ENCODE measurements at regions of chr2 and their contacts with region 1.

Region 1: GRCh38 chr2:113198790-113199612 is 25.2 kb downstream of the PSD4 start:
- DNase-seq: no peak
- H3K4me3 ChIP-seq: peak overlapping the region; percentile 71
- H3K27ac ChIP-seq: no peak overlapping the region
- H3K27me3 ChIP-seq: peaks cover 18% of the 10 kb centered on the region
- CTCF ChIP-seq: peak; percentile 78

Region 2: GRCh38 chr2:112782234-112782799 is 416.7 kb before region 1 on chr2:
- CTCF ChIA-PET with region 1: no interaction called
- POLR2A ChIA-PET with region 1: no interaction called
- DNase-seq: no peak
- H3K4me3 ChIP-seq: no peak overlapping the region
- H3K27ac ChIP-seq: no peak overlapping the region
- H3K27me3 ChIP-seq: no peaks in the 10 kb centered on the region
- CTCF ChIP-seq: no peak

Region 3: DNA sequence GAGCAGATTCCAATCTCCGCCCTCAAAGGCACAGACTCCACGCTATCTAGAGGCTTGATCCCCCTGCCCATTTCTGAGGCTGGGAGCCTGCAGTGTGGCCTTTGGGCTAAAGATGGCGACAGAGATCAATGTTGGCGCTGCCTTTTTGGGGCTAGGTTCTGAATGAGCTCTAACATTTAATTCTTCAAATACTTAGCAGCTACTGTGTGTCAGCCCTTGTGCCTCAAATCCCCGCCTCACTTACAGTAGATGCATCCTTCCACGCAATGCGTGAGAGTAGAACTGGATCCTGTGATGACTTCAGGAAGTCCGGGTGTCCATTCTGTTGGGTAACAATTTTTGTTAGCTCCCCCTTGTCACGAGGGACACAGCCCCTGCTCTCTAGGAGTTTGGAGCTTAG is 118.9 kb before region 1 on chr2:
- CTCF ChIA-PET with region 1: interaction called, 18 read pairs
- POLR2A ChIA-PET with region 1: no interaction called
- DNase-seq: peak; percentile 3
- H3K4me3 ChIP-seq: no peak overlapping the region
- H3K27ac ChIP-seq: no peak overlapping the region
- H3K27me3 ChIP-seq: peaks cover 11% of the 10 kb centered on the region
- CTCF ChIP-seq: peak; percentile 61

Region 4: GRCh38 chr2:113211226-113212105 is 12.5 kb after region 1 on chr2:
- CTCF ChIA-PET with region 1: interaction called, 15 read pairs
- POLR2A ChIA-PET with region 1: no interaction called
- DNase-seq: no peak
- H3K4me3 ChIP-seq: no peak overlapping the region
- H3K27ac ChIP-seq: peak overlapping the region; percentile 11
- H3K27me3 ChIP-seq: no peaks in the 10 kb centered on the region
- CTCF ChIP-seq: no peak

Region 5: GRCh38 chr2:113233593-113234550 is 34.9 kb after region 1 on chr2:
- CTCF ChIA-PET with region 1: interaction called, 34 read pairs
- POLR2A ChIA-PET with region 1: no interaction called
- DNase-seq: no peak
- H3K4me3 ChIP-seq: no peak overlapping the region
- H3K27ac ChIP-seq: no peak overlapping the region
- H3K27me3 ChIP-seq: no peaks in the 10 kb centered on the region
- CTCF ChIP-seq: peak; percentile 22; the same call in 1 of the 2 replicates

Region 6: DNA sequence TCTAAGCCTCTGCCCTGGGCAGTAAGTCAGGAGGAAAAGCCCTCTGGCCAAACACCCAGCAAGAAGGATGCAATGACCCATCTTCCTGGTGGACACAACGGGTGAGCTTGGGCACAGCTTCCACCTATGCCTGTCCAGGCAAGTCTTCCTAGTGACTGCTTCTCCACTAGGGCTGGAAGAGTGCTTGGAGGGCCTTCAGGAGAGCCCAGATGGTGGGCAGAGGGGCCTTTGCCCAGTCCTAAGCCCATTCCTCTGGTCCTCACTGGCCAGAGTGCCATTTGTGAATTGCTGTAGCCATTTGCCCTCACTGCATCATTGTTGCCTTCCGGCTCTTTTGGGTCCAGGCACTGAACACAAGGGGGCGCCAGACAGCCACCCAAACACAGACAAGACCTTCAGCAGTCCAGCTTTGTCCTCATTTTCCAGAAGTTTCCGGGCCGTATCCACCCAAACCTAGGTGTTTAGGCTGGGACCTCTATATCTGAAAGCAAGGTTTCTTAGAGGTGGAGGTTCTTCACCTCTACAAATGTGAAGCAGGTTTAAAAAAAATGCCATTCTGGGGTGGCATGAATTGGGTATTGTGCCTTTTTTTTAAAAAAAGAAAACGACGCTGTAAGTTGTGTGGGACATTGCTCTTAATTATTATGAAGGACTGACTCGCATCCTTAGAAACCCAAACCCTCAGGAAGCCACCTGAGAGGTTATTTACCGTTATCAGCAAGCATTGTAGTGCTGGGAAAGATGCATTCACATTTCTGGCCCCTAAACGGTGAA is 50.2 kb after region 1 on chr2:
- CTCF ChIA-PET with region 1: interaction called, 19 read pairs
- POLR2A ChIA-PET with region 1: no interaction called
- DNase-seq: peak; percentile 42
- H3K4me3 ChIP-seq: no peak overlapping the region
- H3K27ac ChIP-seq: no peak overlapping the region
- H3K27me3 ChIP-seq: no peaks in the 10 kb centered on the region
- CTCF ChIP-seq: peak; percentile 96

Region 7: GRCh38 chr2:113370478-113371091 is 171.6 kb after region 1 on chr2:
- CTCF ChIA-PET with region 1: interaction called, 85 read pairs
- POLR2A ChIA-PET with region 1: no interaction called
- DNase-seq: peak; percentile 43
- H3K4me3 ChIP-seq: no peak overlapping the region
- H3K27ac ChIP-seq: no peak overlapping the region
- H3K27me3 ChIP-seq: peaks cover 5% of the 10 kb centered on the region
- CTCF ChIP-seq: peak; percentile 75

Region 8: GRCh38 chr2:113407446-113408099 is 208.6 kb after region 1 on chr2:
- CTCF ChIA-PET with region 1: no interaction called
- POLR2A ChIA-PET with region 1: no interaction called
- DNase-seq: no peak
- H3K4me3 ChIP-seq: no peak overlapping the region
- H3K27ac ChIP-seq: no peak overlapping the region
- H3K27me3 ChIP-seq: peaks cover 14% of the 10 kb centered on the region
- CTCF ChIP-seq: peak; percentile 33; the same call in 1 of the 2 replicates